Activated CD4-positive, alpha-beta T cell treated with anti-CD3 and anti-CD28 coated beads for 36 hours (primary cell): ENCODE measurements at regions of chr4 and their contacts with region 1.

Region 1: GRCh38 chr4:72468904-72469502 is 100.0 kb downstream of the ADAMTS3 start:
- DNase-seq: no peak
- ATAC-seq: no peak
- H3K4me3 Mint-ChIP-seq: no peak overlapping the region
- H3K27ac Mint-ChIP-seq: no peak overlapping the region
- H3K4me1 Mint-ChIP-seq: no peaks in the 10 kb centered on the region
- H3K27me3 Mint-ChIP-seq: peaks cover 6% of the 10 kb centered on the region

Region 2: GRCh38 chr4:72283359-72283758 is 185.6 kb before region 1 on chr4:
- CTCF ChIA-PET with region 1: no interaction called
- POLR2A ChIA-PET with region 1: no interaction called
- intact Hi-C with region 1: no loop called
- DNase-seq: no peak
- ATAC-seq: no peak
- H3K4me3 Mint-ChIP-seq: no peak overlapping the region
- H3K27ac Mint-ChIP-seq: no peak overlapping the region
- H3K4me1 Mint-ChIP-seq: no peaks in the 10 kb centered on the region
- H3K27me3 Mint-ChIP-seq: peaks cover 7% of the 10 kb centered on the region

Region 3: DNA sequence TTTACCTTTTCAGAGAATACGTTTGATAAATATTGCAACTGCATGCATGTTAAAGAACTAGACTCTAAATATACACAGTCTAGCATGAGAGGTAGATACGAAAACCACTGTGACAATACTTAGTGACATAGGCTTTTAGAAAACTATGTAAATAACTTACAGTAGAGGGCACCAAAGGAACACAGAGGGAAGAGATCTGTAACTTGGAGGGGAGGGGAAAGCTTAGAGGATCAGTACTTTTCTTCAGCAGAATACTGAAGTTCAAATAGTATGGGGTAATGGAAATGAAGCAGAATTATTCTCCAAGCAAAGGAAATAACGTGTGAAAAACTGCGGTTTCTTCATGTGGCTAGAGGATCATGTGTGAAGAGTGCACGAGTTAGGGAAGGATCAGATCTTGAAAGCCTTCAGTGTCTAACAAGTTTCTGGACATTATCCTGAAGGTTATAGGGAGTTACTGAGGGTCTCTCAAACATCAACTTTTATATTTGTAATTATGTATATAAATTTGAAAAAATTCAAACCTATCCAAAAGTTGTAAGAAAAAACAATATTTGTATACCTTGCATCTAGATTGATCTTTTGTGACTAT is 172.9 kb before region 1 on chr4:
- CTCF ChIA-PET with region 1: no interaction called
- POLR2A ChIA-PET with region 1: no interaction called
- intact Hi-C with region 1: loop called in 1 of 2 experiments (anchors 1 kb)
- DNase-seq: no peak
- ATAC-seq: peak; percentile 36
- H3K4me3 Mint-ChIP-seq: no peak overlapping the region
- H3K27ac Mint-ChIP-seq: no peak overlapping the region
- H3K4me1 Mint-ChIP-seq: no peaks in the 10 kb centered on the region
- H3K27me3 Mint-ChIP-seq: peaks cover 11% of the 10 kb centered on the region

Region 4: DNA sequence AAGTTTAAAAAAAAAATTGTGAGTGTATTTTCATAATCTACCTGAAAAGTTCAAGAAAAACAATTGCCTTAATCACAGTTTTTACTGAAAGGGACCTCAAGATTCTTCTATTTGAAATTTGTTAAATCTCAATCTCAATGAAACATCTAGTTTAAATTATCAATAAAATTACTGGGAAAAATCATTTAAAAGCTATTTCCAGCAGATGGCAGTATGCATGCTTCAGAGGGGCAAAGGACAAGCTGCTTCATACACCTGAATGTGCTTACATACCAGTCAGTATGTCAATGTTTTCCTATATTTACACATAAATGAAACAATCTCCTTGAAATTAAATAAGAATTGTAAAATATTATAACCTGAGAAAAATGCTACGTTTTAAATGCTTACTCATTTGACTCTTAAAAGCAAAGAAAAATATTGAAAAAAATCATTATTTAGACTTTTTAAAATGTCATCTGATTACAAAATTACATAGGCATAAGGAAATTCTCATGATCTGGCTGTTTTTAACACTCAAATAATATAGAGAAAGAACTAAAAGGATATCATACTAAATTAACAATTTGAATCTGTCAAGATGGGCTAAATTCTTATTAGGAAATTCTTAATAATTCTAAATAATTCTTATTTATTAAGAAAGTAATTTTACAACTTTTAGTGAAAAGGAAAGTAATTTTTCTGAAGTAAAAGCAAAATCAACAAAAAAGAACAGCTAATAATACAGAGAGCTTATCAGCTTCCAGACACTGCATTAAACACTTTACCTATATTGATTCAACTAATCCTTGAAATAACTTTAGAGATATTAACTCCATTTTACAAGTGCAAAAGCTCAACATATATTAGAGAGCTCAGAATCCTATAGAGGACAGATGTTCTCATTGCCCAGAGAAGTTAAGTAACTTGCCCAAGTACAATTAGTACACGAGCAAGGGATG is 142.0 kb before region 1 on chr4:
- CTCF ChIA-PET with region 1: interaction called, 3 read pairs
- POLR2A ChIA-PET with region 1: no interaction called
- intact Hi-C with region 1: loop called (anchors 1 to 2 kb)
- DNase-seq: no peak
- ATAC-seq: no peak
- H3K4me3 Mint-ChIP-seq: no peak overlapping the region
- H3K27ac Mint-ChIP-seq: no peak overlapping the region
- H3K4me1 Mint-ChIP-seq: no peaks in the 10 kb centered on the region
- H3K27me3 Mint-ChIP-seq: peaks cover 5% of the 10 kb centered on the region